H1 (cell line): ENCODE measurements at regions of chr10 and their contacts with region 1.

Region 1: DNA sequence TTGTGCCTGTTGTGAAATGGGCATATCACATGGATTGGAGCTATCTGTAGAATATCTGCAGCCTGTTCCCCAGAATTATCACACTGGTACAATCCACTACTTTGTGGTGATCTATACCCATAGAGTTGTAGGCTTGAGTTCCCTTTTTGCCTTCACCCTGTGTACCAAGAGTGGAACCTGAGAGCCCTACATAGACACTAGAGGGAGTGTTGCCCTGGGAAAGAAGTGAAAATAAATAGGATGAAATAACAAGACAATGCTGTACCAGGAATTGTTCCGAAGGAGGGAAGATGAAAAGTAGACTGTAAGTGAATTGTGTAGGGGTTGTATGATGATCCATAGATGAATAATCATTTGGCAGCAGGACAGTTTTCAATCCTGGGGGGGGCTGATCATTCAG is 9.0 kb downstream of the SORCS3 start:
- DNase-seq: no peak
- H3K4me3 ChIP-seq: no peak overlapping the region
- H3K27ac ChIP-seq: no peak overlapping the region
- H3K4me1 ChIP-seq: no peaks in the 10 kb centered on the region
- H3K27me3 ChIP-seq: no peaks in the 10 kb centered on the region
- CTCF ChIP-seq: peak in 2 of 3 experiments; percentile 47 to 51; a peak in 2 of 4 replicates
- EP300 ChIP-seq: no peak
- POLR2A ChIP-seq: no peak
- RAD21 ChIP-seq: peak; percentile 71 to 75

Region 2: GRCh38 chr10:104548090-104548489 is 102.0 kb before region 1 on chr10:
- CTCF ChIA-PET with region 1: no interaction called
- POLR2A ChIA-PET with region 1: no interaction called
- DNase-seq: peak; percentile 5 to 54
- H3K4me3 ChIP-seq: no peak overlapping the region
- H3K27ac ChIP-seq: no peak overlapping the region
- H3K4me1 ChIP-seq: peaks cover 0 to 3% (median 1%) of the 10 kb centered on the region in 4 experiments; a peak in 3 of 7 replicates
- H3K27me3 ChIP-seq: no peaks in the 10 kb centered on the region
- CTCF ChIP-seq: no peak
- EP300 ChIP-seq: no peak
- POLR2A ChIP-seq: no peak
- RAD21 ChIP-seq: no peak

Region 3: GRCh38 chr10:104638861-104639589 is 11.0 kb before region 1 on chr10:
- CTCF ChIA-PET with region 1: interaction called, 20 read pairs
- POLR2A ChIA-PET with region 1: no interaction called
- DNase-seq: peak in 1 of 2 experiments; percentile 86
- H3K4me3 ChIP-seq: peak overlapping the region; percentile 50 to 71 (median 60)
- H3K27ac ChIP-seq: no peak overlapping the region
- H3K4me1 ChIP-seq: peaks cover 0 to 18% (median 7%) of the 10 kb centered on the region in 4 experiments; a peak in 4 of 7 replicates
- H3K27me3 ChIP-seq: peaks cover 32 to 65% (median 61%) of the 10 kb centered on the region in 4 experiments
- CTCF ChIP-seq: peak; percentile 75 to 82 (median 78)
- EP300 ChIP-seq: no peak
- POLR2A ChIP-seq: no peak
- RAD21 ChIP-seq: peak; percentile 80 to 86

Region 4: DNA sequence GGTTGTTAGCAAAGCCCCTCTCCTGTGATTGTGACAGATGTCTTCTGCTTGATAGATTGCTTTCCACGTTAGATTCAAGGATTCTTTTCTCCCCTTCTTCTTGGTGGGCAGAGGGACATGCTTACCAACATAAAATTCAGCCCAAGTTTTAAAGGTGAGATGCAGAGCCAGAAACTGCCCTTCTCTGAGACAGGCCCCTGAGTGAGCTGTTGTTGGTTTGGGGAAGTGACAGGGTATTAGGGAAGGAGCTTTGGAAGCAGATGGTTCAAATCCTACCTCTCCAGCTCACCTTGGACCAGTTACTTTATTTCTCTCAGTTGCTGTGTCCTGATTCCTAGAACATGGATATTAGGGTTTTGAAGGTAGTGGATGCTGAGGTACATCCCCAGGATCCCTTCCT is 44.0 kb after region 1 on chr10:
- CTCF ChIA-PET with region 1: interaction called, 10 read pairs
- POLR2A ChIA-PET with region 1: no interaction called
- DNase-seq: no peak
- H3K4me3 ChIP-seq: no peak overlapping the region
- H3K27ac ChIP-seq: no peak overlapping the region
- H3K4me1 ChIP-seq: no peaks in the 10 kb centered on the region
- H3K27me3 ChIP-seq: no peaks in the 10 kb centered on the region
- CTCF ChIP-seq: no peak
- EP300 ChIP-seq: no peak
- POLR2A ChIP-seq: no peak
- RAD21 ChIP-seq: no peak

Region 5: GRCh38 chr10:104774234-104774633 is 124.2 kb after region 1 on chr10:
- CTCF ChIA-PET with region 1: interaction called, 10 read pairs
- POLR2A ChIA-PET with region 1: no interaction called
- DNase-seq: no peak
- H3K4me3 ChIP-seq: no peak overlapping the region
- H3K27ac ChIP-seq: no peak overlapping the region
- H3K4me1 ChIP-seq: peaks cover 0 to 3% (median under 1%) of the 10 kb centered on the region in 4 experiments; a peak in 2 of 7 replicates
- H3K27me3 ChIP-seq: no peaks in the 10 kb centered on the region
- CTCF ChIP-seq: no peak
- EP300 ChIP-seq: no peak
- POLR2A ChIP-seq: no peak
- RAD21 ChIP-seq: no peak